Endothelial cell of umbilical vein (primary cell): ENCODE measurements at regions of chr3 and their contacts with region 1.

Region 1: GRCh38 chr3:48400824-48401433 is 28.9 kb downstream of the FBXW12 start:
- DNase-seq: peak; percentile 52
- H3K4me3 ChIP-seq: no peak overlapping the region
- H3K27ac ChIP-seq: no peak overlapping the region
- H3K4me1 ChIP-seq: peaks cover 10% of the 10 kb centered on the region
- H3K27me3 ChIP-seq: peaks cover 1% of the 10 kb centered on the region in 2 experiments
- CTCF ChIP-seq: peak; percentile 69 to 72
- POLR2A ChIP-seq: no peak

Region 2: GRCh38 chr3:47705391-47705790 is 695.5 kb before region 1 on chr3:
- CTCF ChIA-PET with region 1: no interaction called
- POLR2A ChIA-PET with region 1: no interaction called
- dilution Hi-C with region 1: no loop called
- intact Hi-C with region 1: no loop called
- DNase-seq: no peak
- H3K4me3 ChIP-seq: no peak overlapping the region
- H3K27ac ChIP-seq: no peak overlapping the region
- H3K4me1 ChIP-seq: no peaks in the 10 kb centered on the region
- H3K27me3 ChIP-seq: no peaks in the 10 kb centered on the region
- CTCF ChIP-seq: no peak
- POLR2A ChIP-seq: no peak

Region 3: GRCh38 chr3:48001991-48002390 is 398.9 kb before region 1 on chr3:
- CTCF ChIA-PET with region 1: no interaction called
- POLR2A ChIA-PET with region 1: no interaction called
- dilution Hi-C with region 1: no loop called
- intact Hi-C with region 1: no loop called
- DNase-seq: no peak
- H3K4me3 ChIP-seq: no peak overlapping the region
- H3K27ac ChIP-seq: no peak overlapping the region
- H3K4me1 ChIP-seq: no peaks in the 10 kb centered on the region
- H3K27me3 ChIP-seq: no peaks in the 10 kb centered on the region
- CTCF ChIP-seq: no peak
- POLR2A ChIP-seq: no peak

Region 4: DNA sequence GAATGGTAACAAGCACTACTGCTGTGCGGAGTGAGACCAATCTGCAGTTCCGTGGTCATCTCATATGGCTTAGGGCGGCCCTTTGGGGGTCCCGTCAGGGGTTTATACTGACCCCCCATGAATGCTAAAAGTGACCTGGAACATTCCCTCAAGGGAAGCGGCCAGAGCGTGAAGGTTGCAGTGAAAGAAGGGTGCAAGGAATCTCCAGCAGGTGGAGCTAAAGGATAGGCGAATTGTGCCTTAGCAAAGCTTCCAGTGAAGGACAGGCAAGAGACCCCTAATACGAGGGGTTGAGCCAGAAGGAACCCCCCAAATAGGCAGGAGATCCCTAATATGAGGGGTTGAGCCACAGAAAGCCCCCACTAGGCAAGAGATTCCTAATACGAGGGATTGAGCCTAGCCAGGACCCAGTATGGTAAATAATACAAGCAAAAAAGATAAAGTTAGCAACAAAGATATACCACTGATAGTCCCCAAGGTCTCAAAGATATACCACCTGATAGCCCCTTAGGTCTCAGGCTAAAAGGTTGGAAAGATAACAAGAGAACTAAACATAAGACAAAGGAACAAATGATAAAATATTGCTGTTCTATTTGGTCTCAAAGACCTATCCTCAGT is 127.2 kb before region 1 on chr3:
- CTCF ChIA-PET with region 1: interaction called, 35 read pairs
- POLR2A ChIA-PET with region 1: no interaction called
- dilution Hi-C with region 1: no loop called
- intact Hi-C with region 1: loop called (anchors 1 kb)
- DNase-seq: peak; percentile 76
- H3K4me3 ChIP-seq: no peak overlapping the region
- H3K27ac ChIP-seq: no peak overlapping the region
- H3K4me1 ChIP-seq: no peaks in the 10 kb centered on the region
- H3K27me3 ChIP-seq: no peaks in the 10 kb centered on the region
- CTCF ChIP-seq: peak; percentile 64 to 73
- POLR2A ChIP-seq: no peak

Region 5: GRCh38 chr3:48364840-48365239 is 36.1 kb before region 1 on chr3:
- CTCF ChIA-PET with region 1: no interaction called
- POLR2A ChIA-PET with region 1: no interaction called
- dilution Hi-C with region 1: no loop called
- intact Hi-C with region 1: no loop called
- DNase-seq: no peak
- H3K4me3 ChIP-seq: no peak overlapping the region
- H3K27ac ChIP-seq: no peak overlapping the region
- H3K4me1 ChIP-seq: no peaks in the 10 kb centered on the region
- H3K27me3 ChIP-seq: peaks cover 4 to 14% of the 10 kb centered on the region in 2 experiments
- CTCF ChIP-seq: no peak
- POLR2A ChIP-seq: no peak

Region 6: DNA sequence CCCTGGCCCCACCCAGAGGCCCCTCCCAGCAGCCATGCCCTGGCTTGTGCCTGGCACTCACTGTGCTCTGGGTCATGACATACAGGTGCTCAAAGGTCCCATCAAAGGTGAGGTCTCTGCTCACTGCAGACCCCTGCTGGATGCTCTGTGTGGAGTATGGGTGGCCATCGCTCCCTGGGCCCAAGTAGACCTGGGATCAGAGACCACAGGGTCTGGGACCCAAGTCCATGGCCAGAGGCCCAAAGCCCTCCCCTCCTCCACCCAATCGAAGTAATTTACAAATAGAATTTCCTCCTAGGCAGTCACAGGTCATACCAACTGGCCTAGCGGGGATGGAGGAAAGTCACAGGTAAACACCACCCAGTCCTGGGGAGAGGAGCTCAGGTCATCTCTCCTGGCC is 21.3 kb after region 1 on chr3:
- CTCF ChIA-PET with region 1: interaction called, 17 read pairs
- POLR2A ChIA-PET with region 1: no interaction called
- dilution Hi-C with region 1: no loop called
- intact Hi-C with region 1: no loop called
- DNase-seq: no peak
- H3K4me3 ChIP-seq: no peak overlapping the region
- H3K27ac ChIP-seq: no peak overlapping the region
- H3K4me1 ChIP-seq: no peaks in the 10 kb centered on the region
- H3K27me3 ChIP-seq: no peaks in the 10 kb centered on the region
- CTCF ChIP-seq: no peak
- POLR2A ChIP-seq: no peak

Region 7: DNA sequence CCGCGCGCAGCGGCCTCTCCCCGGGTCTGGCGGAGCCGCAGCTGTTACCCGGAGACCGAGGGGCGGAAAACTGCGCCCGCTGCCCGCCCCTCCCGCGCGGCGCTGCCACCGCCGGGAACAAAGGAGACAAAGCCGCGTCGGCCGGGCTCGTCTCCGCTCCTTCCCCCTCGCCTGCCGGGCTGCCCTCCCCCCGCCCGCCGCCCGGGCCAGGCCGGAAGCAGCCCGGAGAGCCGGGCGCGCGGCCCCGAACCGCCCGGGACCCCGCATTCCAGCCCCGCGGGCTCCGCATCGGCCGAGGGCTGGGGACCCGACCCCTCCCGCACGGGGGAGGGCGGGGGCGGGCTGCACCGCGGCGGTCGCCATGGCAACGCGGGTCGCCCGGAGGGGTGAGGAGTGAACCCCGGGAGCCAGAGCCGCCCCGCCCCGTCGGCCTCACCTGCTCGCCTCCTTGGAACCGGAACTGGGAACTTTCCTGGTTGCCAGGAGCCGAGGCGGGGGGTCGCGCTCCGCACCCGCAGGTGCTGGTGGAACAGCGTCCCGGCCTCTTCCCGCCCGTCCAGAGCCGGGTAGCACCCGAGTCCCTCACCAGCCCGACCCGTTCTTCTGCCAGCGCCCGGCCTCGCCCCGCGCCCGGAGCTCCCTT is 28.5 kb after region 1 on chr3:
- CTCF ChIA-PET with region 1: interaction called, 94 read pairs
- POLR2A ChIA-PET with region 1: no interaction called
- dilution Hi-C with region 1: no loop called
- intact Hi-C with region 1: no loop called
- DNase-seq: peak; percentile 28
- H3K4me3 ChIP-seq: peak overlapping the region; percentile 49 to 74 (median 62)
- H3K27ac ChIP-seq: peak overlapping the region; percentile 33
- H3K4me1 ChIP-seq: peaks cover 10% of the 10 kb centered on the region
- H3K27me3 ChIP-seq: no peaks in the 10 kb centered on the region
- CTCF ChIP-seq: no peak
- POLR2A ChIP-seq: peak; percentile 55

Region 8: DNA sequence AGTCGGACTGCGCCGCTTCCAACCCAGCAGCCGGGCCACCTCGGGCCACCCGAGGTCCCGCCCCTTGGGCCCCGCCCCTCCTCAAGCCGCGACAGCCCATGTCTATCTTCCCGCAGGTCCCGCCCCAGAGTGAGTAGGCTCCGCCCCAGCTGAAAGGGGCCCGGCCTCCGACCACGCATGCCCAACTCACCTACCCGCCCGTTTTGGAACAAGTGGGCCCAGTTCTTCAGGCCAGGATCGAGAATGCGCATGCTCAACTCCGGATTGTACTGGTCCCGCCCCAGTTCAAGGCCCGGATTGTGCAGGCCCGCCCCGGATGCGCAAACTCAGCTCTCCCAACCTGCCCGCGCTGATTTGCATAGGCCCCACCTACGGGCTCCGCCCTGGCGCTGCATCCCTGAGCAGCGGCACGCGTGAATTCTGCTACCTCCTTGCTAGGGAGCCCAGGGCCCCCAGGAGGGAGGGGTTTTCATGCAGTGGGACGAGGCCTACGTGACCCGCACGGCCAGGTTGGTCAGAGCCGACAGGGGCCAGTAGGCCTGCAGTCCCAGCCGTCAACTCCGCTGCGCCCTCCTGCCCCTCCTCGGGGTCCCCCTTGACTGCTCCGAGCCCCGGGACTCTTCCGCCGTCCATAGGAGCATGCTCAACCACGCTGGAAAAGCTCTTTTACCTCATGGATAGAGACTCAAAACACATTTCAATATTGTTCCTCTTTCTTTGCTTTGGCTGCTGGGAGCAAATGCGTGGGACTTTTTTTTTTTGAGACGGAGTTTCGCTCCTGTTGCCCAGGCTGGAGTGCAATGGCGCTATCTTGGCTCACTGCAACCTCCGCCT is 156.1 kb after region 1 on chr3 and contains the start of gene PFKFB4:
- CTCF ChIA-PET with region 1: interaction called, 19 read pairs
- POLR2A ChIA-PET with region 1: no interaction called
- dilution Hi-C with region 1: no loop called
- intact Hi-C with region 1: no loop called
- DNase-seq: peak; percentile 99
- H3K4me3 ChIP-seq: peak within 1 kb of the TSS; percentile 43 to 63 (median 53)
- H3K27ac ChIP-seq: no peak within 1 kb of the TSS
- H3K4me1 ChIP-seq: peaks cover 12% of the 10 kb centered on the region
- H3K27me3 ChIP-seq: no peaks in the 10 kb centered on the region
- CTCF ChIP-seq: no peak
- POLR2A ChIP-seq: peak; percentile 24
- total RNA-seq, gene PFKFB4: 4.2 and 4.9 TPM in 2 replicates

Region 9: GRCh38 chr3:48656061-48656840 is 255.3 kb after region 1 on chr3:
- CTCF ChIA-PET with region 1: interaction called, 3 read pairs
- POLR2A ChIA-PET with region 1: no interaction called
- dilution Hi-C with region 1: no loop called
- intact Hi-C with region 1: loop called (anchors 1 kb)
- DNase-seq: peak; percentile 73
- H3K4me3 ChIP-seq: peak overlapping the region; percentile 8 to 46 (median 18)
- H3K27ac ChIP-seq: no peak overlapping the region
- H3K4me1 ChIP-seq: peaks cover 7% of the 10 kb centered on the region
- H3K27me3 ChIP-seq: no peaks in the 10 kb centered on the region
- CTCF ChIP-seq: peak; percentile 75 to 85
- POLR2A ChIP-seq: no peak